ENCODE measurements at regions of chr5 and their contacts with region 1.

Region 1: GRCh38 chr5:94968507-94969095 is 316.3 kb downstream of the MCTP1 start:
- DNase-seq: peak; percentile 59 to 72
- H3K4me3 ChIP-seq: no peak overlapping the region
- H3K4me1 ChIP-seq: no peaks in the 10 kb centered on the region
- H3K27me3 ChIP-seq: no peaks in the 10 kb centered on the region

Region 2: GRCh38 chr5:94081088-94081487 is 887.5 kb before region 1 on chr5:
- in situ Hi-C with region 1: no loop called
- DNase-seq: no peak
- H3K4me3 ChIP-seq: no peak overlapping the region
- H3K4me1 ChIP-seq: no peaks in the 10 kb centered on the region
- H3K27me3 ChIP-seq: no peaks in the 10 kb centered on the region

Region 3: DNA sequence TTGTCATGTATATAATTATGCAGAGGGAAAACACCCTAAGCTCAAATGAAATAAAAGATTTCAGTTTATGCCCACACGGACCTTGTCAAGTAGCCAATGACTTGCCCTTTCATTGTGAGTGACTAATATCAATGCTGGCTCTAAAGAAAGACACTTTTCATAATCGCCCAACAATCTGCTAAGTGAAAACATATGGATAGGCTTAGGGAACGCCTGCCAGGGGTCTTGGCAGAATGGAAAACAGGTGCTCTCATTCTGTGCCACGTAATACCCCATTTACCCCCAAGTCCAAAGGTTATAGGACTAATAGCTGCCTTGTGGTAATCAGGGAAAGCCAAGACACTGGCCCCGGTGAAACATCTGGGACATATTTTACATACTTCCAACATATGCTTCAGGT is 192.4 kb before region 1 on chr5:
- in situ Hi-C with region 1: no loop called
- DNase-seq: peak; percentile 54 to 82
- H3K4me3 ChIP-seq: no peak overlapping the region
- H3K4me1 ChIP-seq: peaks cover 27% of the 10 kb centered on the region
- H3K27me3 ChIP-seq: no peaks in the 10 kb centered on the region

Region 4: DNA sequence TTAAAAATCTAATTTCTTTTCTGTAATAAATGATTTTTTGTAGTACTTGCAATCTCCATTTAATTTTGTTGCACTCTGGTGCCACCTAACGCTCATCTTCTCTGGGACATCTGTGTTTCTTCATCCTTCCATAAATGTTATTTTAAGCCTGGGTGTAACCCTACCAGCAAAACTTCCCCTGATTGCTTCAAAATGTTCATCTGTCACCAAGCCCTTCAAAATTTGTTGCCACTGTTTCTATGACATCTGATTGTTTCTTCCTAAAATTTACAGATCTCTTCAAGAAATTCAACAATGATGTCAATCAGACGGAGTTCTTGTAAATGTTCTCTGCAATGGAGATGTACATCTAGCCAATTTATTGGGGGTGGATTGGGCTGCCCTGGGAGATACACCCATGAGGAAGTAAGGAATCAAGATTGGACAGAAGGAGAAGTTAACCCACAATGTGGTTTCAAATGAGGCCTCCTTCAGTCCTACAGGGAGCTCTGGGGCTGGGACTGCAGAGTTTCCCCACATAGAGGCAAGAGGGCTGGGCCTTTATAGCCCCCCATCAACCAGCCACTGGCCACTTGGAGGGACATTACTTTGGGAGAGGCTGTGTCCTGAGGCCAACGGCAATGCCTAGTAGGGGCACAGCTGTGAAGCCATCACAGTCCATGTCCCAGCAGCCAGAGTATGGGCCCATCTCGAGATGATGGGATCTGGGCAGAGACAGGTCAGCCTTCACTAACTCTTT is 293.0 kb after region 1 on chr5:
- in situ Hi-C with region 1: loop called (anchors 25 kb)
- DNase-seq: peak in 1 of 2 experiments; percentile 37
- H3K4me3 ChIP-seq: no peak overlapping the region
- H3K4me1 ChIP-seq: peaks cover 7% of the 10 kb centered on the region
- H3K27me3 ChIP-seq: peaks cover 2% of the 10 kb centered on the region

Region 5: GRCh38 chr5:96079075-96079474 is 1110.5 kb after region 1 on chr5:
- in situ Hi-C with region 1: no loop called
- DNase-seq: no peak
- H3K4me3 ChIP-seq: no peak overlapping the region
- H3K4me1 ChIP-seq: peaks cover 10% of the 10 kb centered on the region
- H3K27me3 ChIP-seq: no peaks in the 10 kb centered on the region

Measured in HAP-1 (cell line).